ENCODE measurements at regions of chrX and their contacts with region 1.

Region 1: GRCh38 chrX:106802387-106803275 is at the start of gene TBC1D8B:
- DNase-seq: peak; percentile 73
- H3K4me3 ChIP-seq: peak within 1 kb of the TSS; percentile 84
- H3K27ac ChIP-seq: peak within 1 kb of the TSS; percentile 11
- H3K27me3 ChIP-seq: no peaks in the 10 kb centered on the region
- CTCF ChIP-seq: no peak
- polyA plus RNA-seq, gene TBC1D8B: 10.4 and 13.6 TPM in 2 replicates

Region 2: GRCh38 chrX:106468433-106468832 is 334.2 kb before region 1 on chrX:
- CTCF ChIA-PET with region 1: no interaction called
- POLR2A ChIA-PET with region 1: interaction called, 22 read pairs
- DNase-seq: no peak
- H3K4me3 ChIP-seq: no peak overlapping the region
- H3K27ac ChIP-seq: no peak overlapping the region
- H3K27me3 ChIP-seq: no peaks in the 10 kb centered on the region
- CTCF ChIP-seq: no peak